ENCODE measurements at regions of chr12 and their contacts with region 1.

Region 1: DNA sequence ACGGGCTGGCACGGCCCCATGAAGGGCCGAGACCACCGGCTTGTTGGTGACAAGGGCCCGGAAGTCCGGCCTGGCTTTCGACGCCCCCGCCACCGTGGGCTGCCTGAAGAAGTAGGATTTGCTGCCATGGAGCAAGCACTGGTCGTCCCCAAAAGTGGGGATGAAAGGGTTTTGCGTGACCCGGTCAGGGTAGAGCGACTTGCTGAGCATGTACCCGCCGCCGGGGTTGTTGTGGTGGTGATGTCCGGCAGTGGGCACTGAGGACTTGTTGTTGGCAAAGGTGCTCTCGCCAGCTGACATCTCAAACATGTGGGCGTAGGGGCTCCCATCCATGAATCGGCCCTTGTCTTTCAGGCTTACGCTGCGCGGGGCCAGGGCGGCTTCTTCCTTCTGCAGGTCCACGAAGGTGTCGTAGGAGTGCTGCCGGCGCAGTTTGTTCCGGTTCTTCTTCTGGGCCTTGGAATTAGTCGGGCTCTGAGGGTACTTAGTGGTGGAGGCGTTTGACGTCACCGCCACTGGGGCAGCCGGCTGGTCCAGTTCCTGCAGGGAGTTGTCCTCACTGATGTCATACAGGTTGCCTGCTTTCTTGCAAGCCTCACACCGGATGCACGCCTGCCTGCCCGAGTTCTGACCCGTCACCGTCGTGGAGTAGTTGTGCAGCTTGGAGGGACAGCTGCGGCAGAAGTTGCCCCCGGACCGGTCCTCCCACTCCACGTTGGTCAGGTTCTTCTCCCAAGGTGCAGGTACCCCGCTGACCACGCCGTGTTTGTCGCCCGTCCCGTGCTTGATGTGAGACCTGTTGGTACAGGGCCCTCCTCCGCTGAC is 366.6 kb downstream of the EMP1 start:
- DNase-seq: peak in 2 of 4 donors; percentile 34 to 76
- ATAC-seq: no peak
- H3K4me3 ChIP-seq: no peak overlapping the region
- H3K27ac ChIP-seq: no peak overlapping the region
- H3K4me1 ChIP-seq: no peaks in the 10 kb centered on the region
- H3K27me3 ChIP-seq: no peaks in the 10 kb centered on the region
- CTCF ChIP-seq: no peak

Region 2: GRCh38 chr12:13609894-13610679 is 47.0 kb after region 1 on chr12:
- intact Hi-C with region 1: loop called in 1 of 2 experiments (anchors 5 kb)
- DNase-seq: no peak
- ATAC-seq: no peak
- H3K4me3 ChIP-seq: no peak overlapping the region
- H3K27ac ChIP-seq: no peak overlapping the region
- H3K4me1 ChIP-seq: no peaks in the 10 kb centered on the region
- H3K27me3 ChIP-seq: no peaks in the 10 kb centered on the region
- CTCF ChIP-seq: no peak

Measured in left lung (tissue), 14 donors.